ENCODE measurements at regions of chr6 and their contacts with region 1.

Region 1: DNA sequence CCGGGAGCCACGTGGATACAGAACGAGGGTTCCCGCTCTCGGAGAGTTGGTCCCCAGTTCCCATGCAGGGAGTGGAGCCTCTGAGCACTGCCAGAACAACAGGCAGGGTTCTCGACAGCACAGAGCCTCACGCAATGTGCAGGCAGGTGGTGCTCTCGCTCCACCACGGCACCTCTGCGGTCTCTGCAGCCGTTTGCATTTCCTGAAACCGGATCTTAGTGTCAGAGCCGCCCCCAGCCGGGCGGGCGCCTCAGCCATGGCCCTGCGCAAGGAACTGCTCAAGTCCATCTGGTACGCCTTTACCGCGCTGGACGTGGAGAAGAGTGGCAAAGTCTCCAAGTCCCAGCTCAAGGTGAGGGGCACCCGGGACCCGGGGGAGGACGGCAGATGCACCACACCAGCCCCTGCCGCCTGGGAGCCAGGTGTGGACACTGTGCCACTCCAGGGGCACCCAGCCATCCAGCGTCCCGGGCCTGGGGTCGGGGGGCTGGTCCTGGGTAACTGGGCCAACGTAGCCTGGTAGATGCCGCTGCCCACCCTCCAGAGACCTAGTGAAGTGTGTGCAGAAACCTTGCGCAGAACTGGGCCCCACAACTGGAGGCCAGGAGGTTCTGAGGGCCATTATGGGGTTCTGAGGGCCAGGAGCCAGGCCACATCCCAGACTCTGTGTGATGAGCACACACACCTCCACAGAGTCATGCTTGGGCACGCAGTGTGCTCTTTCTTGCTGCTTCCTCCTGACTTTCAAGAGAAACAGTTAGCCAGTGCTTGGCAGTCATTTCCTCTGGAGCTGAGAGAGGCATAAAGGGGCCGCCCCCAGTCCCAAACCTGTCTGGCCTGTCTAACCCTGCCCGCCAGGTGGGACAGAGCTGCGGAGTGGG is at the start of gene DEF6:
- DNase-seq: peak; percentile 91
- ATAC-seq: peak; percentile 74
- H3K4me3 ChIP-seq: peak within 1 kb of the TSS; percentile 79 to 97 (median 95)
- H3K4me3 Mint-ChIP-seq: peak within 1 kb of the TSS; percentile 82
- H3K27ac ChIP-seq: peak within 1 kb of the TSS; percentile 87 to 98
- H3K27ac Mint-ChIP-seq: peak within 1 kb of the TSS; percentile 97
- H3K4me1 ChIP-seq: peaks cover 48 to 54% of the 10 kb centered on the region in 2 donors
- H3K4me1 Mint-ChIP-seq: peaks cover 50% of the 10 kb centered on the region
- H3K27me3 ChIP-seq: no peaks in the 10 kb centered on the region
- H3K27me3 Mint-ChIP-seq: no peaks in the 10 kb centered on the region
- CTCF ChIP-seq: peak; percentile 97
- total RNA-seq, gene DEF6: 105 and 116 TPM in 2 replicates

Region 2: GRCh38 chr6:34664256-34664971 is 633.4 kb before region 1 on chr6:
- CTCF ChIA-PET with region 1: no interaction called
- POLR2A ChIA-PET with region 1: no interaction called
- intact Hi-C with region 1: no loop called
- DNase-seq: no peak
- ATAC-seq: no peak
- H3K4me3 ChIP-seq: no peak overlapping the region
- H3K4me3 Mint-ChIP-seq: peak overlapping the region; percentile 24
- H3K27ac ChIP-seq: peak overlapping the region in 1 of 2 donors; percentile 3
- H3K27ac Mint-ChIP-seq: peak overlapping the region; percentile 61
- H3K4me1 ChIP-seq: peaks cover 30% of the 10 kb centered on the region in 2 donors
- H3K4me1 Mint-ChIP-seq: peaks cover 60% of the 10 kb centered on the region
- H3K27me3 ChIP-seq: no peaks in the 10 kb centered on the region
- H3K27me3 Mint-ChIP-seq: no peaks in the 10 kb centered on the region
- CTCF ChIP-seq: no peak

Region 3: DNA sequence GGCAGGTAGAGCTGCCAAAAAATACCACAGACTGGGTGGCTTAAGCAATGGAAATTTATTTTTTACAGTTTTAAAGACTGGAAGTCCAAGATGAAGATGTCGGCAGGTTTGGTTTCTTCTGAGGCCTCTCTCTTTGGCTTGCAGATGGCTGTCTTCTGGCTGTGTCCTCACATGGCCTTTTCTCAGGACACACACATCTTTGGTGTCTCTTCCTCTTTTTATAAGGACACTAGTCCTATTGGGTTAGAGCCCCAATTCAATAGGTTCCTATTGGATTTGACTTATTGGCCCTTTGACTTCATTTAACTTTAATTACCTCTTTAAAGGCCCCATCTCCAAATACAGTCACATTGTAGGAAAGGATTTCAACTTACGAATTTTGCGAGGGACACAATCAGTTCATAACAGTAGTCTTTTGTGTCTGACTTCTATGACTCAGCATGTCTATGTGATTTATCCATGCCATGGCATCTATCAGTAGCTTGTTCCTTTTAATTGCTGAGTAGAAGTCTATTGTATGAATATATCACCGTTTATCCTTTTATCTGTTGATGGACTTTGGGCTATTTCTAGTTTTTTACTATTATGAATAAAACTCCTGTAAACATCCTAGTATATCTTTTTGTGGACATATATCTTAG is 145.7 kb before region 1 on chr6:
- CTCF ChIA-PET with region 1: no interaction called
- POLR2A ChIA-PET with region 1: no interaction called
- intact Hi-C with region 1: no loop called
- DNase-seq: no peak
- ATAC-seq: no peak
- H3K4me3 ChIP-seq: no peak overlapping the region
- H3K4me3 Mint-ChIP-seq: no peak overlapping the region
- H3K27ac ChIP-seq: no peak overlapping the region
- H3K27ac Mint-ChIP-seq: no peak overlapping the region
- H3K4me1 ChIP-seq: no peaks in the 10 kb centered on the region
- H3K4me1 Mint-ChIP-seq: no peaks in the 10 kb centered on the region
- H3K27me3 ChIP-seq: peaks cover 0 to 3% (median 0%) of the 10 kb centered on the region in 4 experiments
- H3K27me3 Mint-ChIP-seq: peaks cover 13% of the 10 kb centered on the region
- CTCF ChIP-seq: no peak

Region 4: DNA sequence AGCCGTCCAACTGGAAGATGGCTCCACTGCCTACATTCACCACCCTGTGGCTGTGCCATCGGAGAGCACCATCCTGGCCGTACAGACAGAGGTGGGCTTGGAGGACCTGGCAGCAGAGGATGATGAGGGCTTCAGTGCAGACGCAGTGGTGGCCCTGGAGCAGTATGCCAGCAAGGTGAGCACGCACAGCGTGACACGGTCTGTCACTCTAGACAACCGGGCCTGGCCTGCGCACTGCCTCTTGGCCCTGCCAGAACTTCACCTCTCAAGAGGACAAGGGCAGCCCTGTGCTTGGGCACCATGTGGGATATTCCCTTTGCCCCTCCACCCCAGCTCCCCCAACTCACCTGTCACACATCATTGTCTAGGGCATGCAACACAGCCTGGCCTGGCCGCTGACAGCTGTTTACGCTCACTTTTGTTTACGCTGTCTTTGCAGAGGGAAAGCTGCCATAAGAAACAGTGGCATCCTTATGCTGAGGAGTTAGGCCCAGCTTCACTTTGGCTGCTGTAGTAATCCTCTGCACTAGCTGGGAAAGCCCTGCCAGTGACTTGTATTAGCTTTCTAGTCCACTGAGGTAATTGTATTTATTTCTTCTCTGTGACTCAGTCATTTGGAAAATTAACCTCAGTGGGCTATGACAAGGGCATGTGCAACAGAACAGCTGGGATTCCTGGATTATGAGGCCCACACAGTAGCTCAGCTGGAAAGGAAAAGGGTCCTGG is 10.0 kb before region 1 on chr6:
- CTCF ChIA-PET with region 1: interaction called, 16 read pairs
- POLR2A ChIA-PET with region 1: no interaction called
- intact Hi-C with region 1: no loop called
- DNase-seq: no peak
- ATAC-seq: no peak
- H3K4me3 ChIP-seq: no peak overlapping the region
- H3K4me3 Mint-ChIP-seq: no peak overlapping the region
- H3K27ac ChIP-seq: no peak overlapping the region
- H3K27ac Mint-ChIP-seq: no peak overlapping the region
- H3K4me1 ChIP-seq: peaks cover 4 to 10% of the 10 kb centered on the region in 2 donors
- H3K4me1 Mint-ChIP-seq: peaks cover 9% of the 10 kb centered on the region
- H3K27me3 ChIP-seq: no peaks in the 10 kb centered on the region
- H3K27me3 Mint-ChIP-seq: no peaks in the 10 kb centered on the region
- CTCF ChIP-seq: no peak

Region 5: GRCh38 chr6:35318196-35319171 is 20.6 kb after region 1 on chr6:
- CTCF ChIA-PET with region 1: interaction called, 87 read pairs
- POLR2A ChIA-PET with region 1: no interaction called
- intact Hi-C with region 1: no loop called
- DNase-seq: no peak
- ATAC-seq: no peak
- H3K4me3 ChIP-seq: no peak overlapping the region
- H3K4me3 Mint-ChIP-seq: no peak overlapping the region
- H3K27ac ChIP-seq: no peak overlapping the region
- H3K27ac Mint-ChIP-seq: no peak overlapping the region
- H3K4me1 ChIP-seq: peaks cover 0 to 1% of the 10 kb centered on the region in 2 donors
- H3K4me1 Mint-ChIP-seq: peaks cover 14% of the 10 kb centered on the region
- H3K27me3 ChIP-seq: no peaks in the 10 kb centered on the region
- H3K27me3 Mint-ChIP-seq: no peaks in the 10 kb centered on the region
- CTCF ChIP-seq: no peak

Region 6: DNA sequence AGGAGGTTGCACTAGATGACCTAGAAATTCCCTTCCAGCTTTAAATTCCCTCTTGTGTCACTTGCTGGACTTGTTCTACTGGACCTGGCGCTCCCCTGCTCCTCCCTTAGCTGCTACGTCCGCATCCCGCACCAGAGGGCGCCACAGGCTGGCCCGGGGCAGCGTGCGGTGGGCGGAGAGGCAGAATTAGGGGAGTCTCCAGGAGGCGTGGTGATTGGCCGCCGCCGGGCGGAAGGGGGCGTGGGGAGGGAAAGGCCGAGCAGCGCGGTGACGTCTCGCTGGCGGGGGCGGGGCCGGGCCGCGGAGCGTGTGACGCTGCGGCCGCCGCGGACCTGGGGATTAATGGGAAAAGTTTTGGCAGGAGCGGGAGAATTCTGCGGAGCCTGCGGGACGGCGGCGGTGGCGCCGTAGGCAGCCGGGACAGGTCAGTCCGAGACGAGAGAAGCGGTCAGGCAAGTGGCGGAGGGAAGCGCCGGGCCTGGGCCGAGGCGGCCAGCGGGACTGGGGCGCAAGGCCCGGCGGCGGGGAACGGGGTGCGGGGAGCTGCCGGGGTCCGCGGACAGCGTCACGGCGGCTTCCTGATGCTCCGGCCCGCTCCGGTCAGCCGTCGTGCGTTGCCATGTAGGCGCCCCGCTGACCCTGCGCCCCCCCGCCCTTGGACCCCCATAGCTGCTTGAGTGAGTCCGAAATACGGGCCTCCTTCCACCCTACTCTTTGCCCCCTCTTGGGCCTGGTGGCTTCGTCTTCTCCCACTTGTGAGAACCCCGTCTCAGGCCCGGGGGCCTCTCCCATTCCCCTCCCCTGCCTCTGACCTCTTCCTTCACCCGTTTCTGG is 44.6 kb after region 1 on chr6 and contains the start of gene PPARD:
- CTCF ChIA-PET with region 1: interaction called, 37 read pairs
- POLR2A ChIA-PET with region 1: no interaction called
- intact Hi-C with region 1: loop called (anchors 1 kb)
- DNase-seq: peak; percentile 97
- ATAC-seq: peak; percentile 99
- H3K4me3 ChIP-seq: peak within 1 kb of the TSS; percentile 48 to 92 (median 77)
- H3K4me3 Mint-ChIP-seq: peak within 1 kb of the TSS; percentile 99
- H3K27ac ChIP-seq: peak within 1 kb of the TSS; percentile 69 to 91
- H3K27ac Mint-ChIP-seq: peak within 1 kb of the TSS; percentile 95
- H3K4me1 ChIP-seq: peaks cover 39 to 49% of the 10 kb centered on the region in 2 donors
- H3K4me1 Mint-ChIP-seq: peaks cover 55% of the 10 kb centered on the region
- H3K27me3 ChIP-seq: no peaks in the 10 kb centered on the region
- H3K27me3 Mint-ChIP-seq: no peaks in the 10 kb centered on the region
- CTCF ChIP-seq: peak; percentile 92
- total RNA-seq, gene PPARD: 38.9 and 39.0 TPM in 2 replicates

Region 7: GRCh38 chr6:35468181-35468979 is 170.5 kb after region 1 on chr6 and contains the start of gene RPL10A:
- CTCF ChIA-PET with region 1: interaction called, 41 read pairs
- POLR2A ChIA-PET with region 1: interaction called, 4 read pairs
- intact Hi-C with region 1: loop called (anchors 1 kb)
- DNase-seq: peak; percentile 98
- ATAC-seq: peak; percentile 91
- H3K4me3 ChIP-seq: peak within 1 kb of the TSS; percentile 51 to 95 (median 87)
- H3K4me3 Mint-ChIP-seq: peak within 1 kb of the TSS; percentile 99
- H3K27ac ChIP-seq: peak within 1 kb of the TSS; percentile 91 to 92
- H3K27ac Mint-ChIP-seq: peak within 1 kb of the TSS; percentile 99
- H3K4me1 ChIP-seq: peaks cover 19 to 34% of the 10 kb centered on the region in 2 donors
- H3K4me1 Mint-ChIP-seq: peaks cover 42% of the 10 kb centered on the region
- H3K27me3 ChIP-seq: no peaks in the 10 kb centered on the region
- H3K27me3 Mint-ChIP-seq: no peaks in the 10 kb centered on the region
- CTCF ChIP-seq: peak; percentile 91
- total RNA-seq, gene RPL10A: 1,621 and 1,687 TPM in 2 replicates

Region 8: DNA sequence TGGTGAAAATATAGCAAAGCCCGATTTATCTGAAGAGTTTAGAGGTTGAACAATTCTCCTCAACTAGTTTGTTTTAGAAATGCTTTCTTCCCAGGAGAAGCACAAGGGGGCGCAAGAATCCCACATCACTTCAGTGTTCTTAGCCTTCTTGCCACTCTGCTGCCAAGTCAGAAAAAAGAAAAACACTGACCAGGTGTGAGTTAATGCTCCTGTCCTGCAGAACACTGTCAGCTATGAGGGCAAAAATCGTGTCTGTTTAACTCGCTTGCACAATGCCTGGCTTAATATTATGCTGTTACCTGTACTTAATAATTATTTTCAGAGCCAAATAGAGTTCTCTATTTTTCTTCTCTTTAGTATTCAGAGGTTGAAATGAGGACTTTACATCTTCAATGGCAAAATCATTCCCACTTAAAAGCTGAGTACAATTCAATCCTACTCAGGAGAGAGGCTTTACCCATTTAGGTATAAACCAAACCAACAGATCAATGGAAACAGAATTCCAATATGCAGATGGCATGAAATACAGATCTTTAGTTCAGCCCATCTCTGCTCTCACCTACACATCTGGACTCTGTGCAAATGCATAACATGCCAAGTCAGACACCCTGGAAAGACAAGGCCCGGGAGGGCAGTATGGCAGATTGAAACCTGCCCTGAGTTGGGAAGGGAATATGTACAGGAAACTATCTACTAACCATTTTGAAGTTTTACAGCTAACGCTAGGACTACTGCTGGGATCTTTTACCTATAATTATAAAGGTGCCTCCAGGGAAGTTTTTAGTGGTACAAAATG is 286.2 kb after region 1 on chr6:
- CTCF ChIA-PET with region 1: interaction called, 6 read pairs
- POLR2A ChIA-PET with region 1: no interaction called
- intact Hi-C with region 1: loop called (anchors 2 kb)
- DNase-seq: peak; percentile 82
- ATAC-seq: peak; percentile 63
- H3K4me3 ChIP-seq: no peak overlapping the region
- H3K4me3 Mint-ChIP-seq: no peak overlapping the region
- H3K27ac ChIP-seq: no peak overlapping the region
- H3K27ac Mint-ChIP-seq: no peak overlapping the region
- H3K4me1 ChIP-seq: no peaks in the 10 kb centered on the region
- H3K4me1 Mint-ChIP-seq: peaks cover 5% of the 10 kb centered on the region
- H3K27me3 ChIP-seq: no peaks in the 10 kb centered on the region
- H3K27me3 Mint-ChIP-seq: no peaks in the 10 kb centered on the region
- CTCF ChIP-seq: peak; percentile 91

Measured in B cell (primary cell).